Breast epithelium (tissue), 4 donors: ENCODE measurements at regions of chr3 and their contacts with region 1.

Region 1: DNA sequence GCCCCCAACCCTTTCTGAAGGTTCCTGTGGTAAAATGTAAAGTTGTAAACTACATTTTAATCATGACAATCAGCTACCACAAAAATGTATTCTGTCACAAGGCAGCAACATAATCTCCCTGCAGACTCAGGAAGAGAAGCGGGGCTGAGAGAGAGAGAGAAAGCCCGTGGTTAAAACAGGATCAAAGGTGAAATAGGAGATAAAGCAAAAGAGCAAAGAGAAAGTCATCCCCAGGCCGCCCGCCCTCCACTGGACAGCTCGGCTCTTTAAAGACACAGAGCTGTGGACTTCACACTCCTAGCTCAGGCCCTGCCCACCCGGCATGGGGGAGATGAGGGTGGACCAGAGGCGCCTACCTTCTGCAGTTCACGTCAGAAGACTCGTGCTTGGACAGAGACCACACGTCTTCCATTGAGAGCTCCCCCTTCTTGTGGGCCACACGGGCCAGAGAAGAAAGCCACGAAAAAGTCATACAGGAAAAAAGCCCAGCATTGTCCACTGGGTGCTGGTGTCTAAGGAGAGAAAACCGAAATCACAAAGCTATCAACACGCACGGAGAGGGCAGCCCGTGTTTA is 29.4 kb downstream of the ABCC5 start:
- DNase-seq: no peak
- H3K4me3 ChIP-seq: no peak overlapping the region
- H3K27ac ChIP-seq: no peak overlapping the region
- H3K4me1 ChIP-seq: no peaks in the 10 kb centered on the region
- H3K27me3 ChIP-seq: no peaks in the 10 kb centered on the region
- CTCF ChIP-seq: no peak
- POLR2A ChIP-seq: no peak

Region 2: GRCh38 chr3:184002469-184002868 is 14.2 kb after region 1 on chr3:
- intact Hi-C with region 1: loop called (anchors 1 kb)
- DNase-seq: no peak
- H3K4me3 ChIP-seq: no peak overlapping the region
- H3K27ac ChIP-seq: no peak overlapping the region
- H3K4me1 ChIP-seq: no peaks in the 10 kb centered on the region
- H3K27me3 ChIP-seq: no peaks in the 10 kb centered on the region
- CTCF ChIP-seq: no peak
- POLR2A ChIP-seq: no peak

Region 3: GRCh38 chr3:184426681-184427141 is 438.4 kb after region 1 on chr3:
- intact Hi-C with region 1: no loop called
- DNase-seq: peak in 1 of 2 donors; percentile 65
- H3K4me3 ChIP-seq: no peak overlapping the region
- H3K27ac ChIP-seq: no peak overlapping the region
- H3K4me1 ChIP-seq: no peaks in the 10 kb centered on the region
- H3K27me3 ChIP-seq: no peaks in the 10 kb centered on the region
- CTCF ChIP-seq: no peak
- POLR2A ChIP-seq: no peak

Region 4: GRCh38 chr3:184964880-184965279 is 976.6 kb after region 1 on chr3:
- intact Hi-C with region 1: no loop called
- DNase-seq: no peak
- H3K4me3 ChIP-seq: no peak overlapping the region
- H3K27ac ChIP-seq: no peak overlapping the region
- H3K4me1 ChIP-seq: no peaks in the 10 kb centered on the region
- H3K27me3 ChIP-seq: no peaks in the 10 kb centered on the region
- CTCF ChIP-seq: no peak
- POLR2A ChIP-seq: no peak